ENCODE measurements at regions of chr14 and their contacts with region 1.

Region 1: GRCh38 chr14:99230208-99231151 is 41.5 kb downstream of the BCL11B start:
- DNase-seq: peak; percentile 62 to 95 (median 80)
- ATAC-seq: peak; percentile 60
- H3K4me3 ChIP-seq: peak overlapping the region; percentile 28
- H3K4me3 Mint-ChIP-seq: peak overlapping the region; percentile 90
- H3K27ac ChIP-seq: peak overlapping the region; percentile 95 to 97
- H3K27ac Mint-ChIP-seq: peak overlapping the region; percentile 95
- H3K4me1 ChIP-seq: peaks cover 100% of the 10 kb centered on the region
- H3K4me1 Mint-ChIP-seq: peaks cover 96% of the 10 kb centered on the region
- H3K27me3 ChIP-seq: no peaks in the 10 kb centered on the region
- H3K27me3 Mint-ChIP-seq: no peaks in the 10 kb centered on the region
- CTCF ChIP-seq: peak; percentile 46

Region 2: DNA sequence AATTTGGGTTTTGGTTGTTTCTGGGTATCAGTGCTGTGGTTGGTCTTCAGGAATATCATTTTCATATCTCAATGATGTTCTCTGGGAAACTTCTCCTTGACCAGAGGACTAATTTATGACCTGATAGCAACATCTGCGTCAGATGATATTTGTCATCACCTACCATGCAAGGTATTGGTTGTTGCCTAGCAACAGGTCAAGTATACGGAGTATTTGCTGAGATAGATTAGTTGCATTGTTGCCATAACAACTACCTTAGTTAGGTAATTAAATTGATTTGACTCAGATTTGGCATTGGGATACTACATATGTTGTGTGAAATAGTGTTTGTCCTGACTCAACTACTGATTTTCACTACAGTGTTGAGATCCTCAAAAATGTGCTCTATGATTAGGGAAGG is 675.6 kb before region 1 on chr14:
- CTCF ChIA-PET with region 1: no interaction called
- POLR2A ChIA-PET with region 1: no interaction called
- intact Hi-C with region 1: loop called in 1 of 2 experiments (anchors 5 kb)
- DNase-seq: no peak
- ATAC-seq: no peak
- H3K4me3 ChIP-seq: no peak overlapping the region
- H3K4me3 Mint-ChIP-seq: no peak overlapping the region
- H3K27ac ChIP-seq: no peak overlapping the region
- H3K27ac Mint-ChIP-seq: no peak overlapping the region
- H3K4me1 ChIP-seq: no peaks in the 10 kb centered on the region
- H3K4me1 Mint-ChIP-seq: no peaks in the 10 kb centered on the region
- H3K27me3 ChIP-seq: no peaks in the 10 kb centered on the region
- H3K27me3 Mint-ChIP-seq: no peaks in the 10 kb centered on the region
- CTCF ChIP-seq: no peak

Region 3: GRCh38 chr14:99215277-99215676 is 15.2 kb before region 1 on chr14:
- CTCF ChIA-PET with region 1: interaction called, 4 read pairs
- POLR2A ChIA-PET with region 1: interaction called, 4,389 read pairs
- intact Hi-C with region 1: loop called in 1 of 2 experiments (anchors 2 kb)
- DNase-seq: no peak
- ATAC-seq: no peak
- H3K4me3 ChIP-seq: peak overlapping the region; percentile 39
- H3K4me3 Mint-ChIP-seq: peak overlapping the region; percentile 84
- H3K27ac ChIP-seq: peak overlapping the region; percentile 25 to 71
- H3K27ac Mint-ChIP-seq: peak overlapping the region; percentile 95
- H3K4me1 ChIP-seq: peaks cover 99% of the 10 kb centered on the region
- H3K4me1 Mint-ChIP-seq: peaks cover 99% of the 10 kb centered on the region
- H3K27me3 ChIP-seq: no peaks in the 10 kb centered on the region
- H3K27me3 Mint-ChIP-seq: no peaks in the 10 kb centered on the region
- CTCF ChIP-seq: no peak

Region 4: GRCh38 chr14:99241325-99242010 is 11.0 kb after region 1 on chr14:
- CTCF ChIA-PET with region 1: interaction called, 8 read pairs
- POLR2A ChIA-PET with region 1: interaction called, 4,389 read pairs
- intact Hi-C with region 1: loop called in 1 of 2 experiments (anchors 1 kb)
- DNase-seq: peak in 9 of 14 experiments; percentile 49 to 82 (median 66)
- ATAC-seq: peak; percentile 38
- H3K4me3 ChIP-seq: peak overlapping the region; percentile 42
- H3K4me3 Mint-ChIP-seq: peak overlapping the region; percentile 94
- H3K27ac ChIP-seq: peak overlapping the region; percentile 95 to 97
- H3K27ac Mint-ChIP-seq: peak overlapping the region; percentile 95
- H3K4me1 ChIP-seq: peaks cover 89% of the 10 kb centered on the region
- H3K4me1 Mint-ChIP-seq: peaks cover 88% of the 10 kb centered on the region
- H3K27me3 ChIP-seq: no peaks in the 10 kb centered on the region
- H3K27me3 Mint-ChIP-seq: no peaks in the 10 kb centered on the region
- CTCF ChIP-seq: no peak

Region 5: GRCh38 chr14:99252940-99253868 is 22.7 kb after region 1 on chr14:
- CTCF ChIA-PET with region 1: interaction called, 21 read pairs
- POLR2A ChIA-PET with region 1: interaction called, 4,389 read pairs
- intact Hi-C with region 1: no loop called
- DNase-seq: peak in 11 of 14 experiments; percentile 55 to 87 (median 71)
- ATAC-seq: peak; percentile 48
- H3K4me3 ChIP-seq: peak overlapping the region; percentile 33
- H3K4me3 Mint-ChIP-seq: peak overlapping the region; percentile 83
- H3K27ac ChIP-seq: peak overlapping the region; percentile 95 to 97
- H3K27ac Mint-ChIP-seq: peak overlapping the region; percentile 99
- H3K4me1 ChIP-seq: peaks cover 100% of the 10 kb centered on the region
- H3K4me1 Mint-ChIP-seq: peaks cover 97% of the 10 kb centered on the region
- H3K27me3 ChIP-seq: no peaks in the 10 kb centered on the region
- H3K27me3 Mint-ChIP-seq: no peaks in the 10 kb centered on the region
- CTCF ChIP-seq: no peak

Region 6: GRCh38 chr14:99484106-99484505 is 253.6 kb after region 1 on chr14:
- CTCF ChIA-PET with region 1: no interaction called
- POLR2A ChIA-PET with region 1: no interaction called
- intact Hi-C with region 1: no loop called
- DNase-seq: no peak
- ATAC-seq: no peak
- H3K4me3 ChIP-seq: no peak overlapping the region
- H3K4me3 Mint-ChIP-seq: peak overlapping the region; percentile 50
- H3K27ac ChIP-seq: no peak overlapping the region
- H3K27ac Mint-ChIP-seq: no peak overlapping the region
- H3K4me1 ChIP-seq: peaks cover 22% of the 10 kb centered on the region
- H3K4me1 Mint-ChIP-seq: peaks cover 85% of the 10 kb centered on the region
- H3K27me3 ChIP-seq: no peaks in the 10 kb centered on the region
- H3K27me3 Mint-ChIP-seq: no peaks in the 10 kb centered on the region
- CTCF ChIP-seq: no peak

Region 7: GRCh38 chr14:99946652-99947489 is 716.4 kb after region 1 on chr14:
- CTCF ChIA-PET with region 1: no interaction called
- POLR2A ChIA-PET with region 1: no interaction called
- intact Hi-C with region 1: no loop called
- DNase-seq: peak; percentile 25 to 71 (median 44)
- ATAC-seq: peak; percentile 65
- H3K4me3 ChIP-seq: peak overlapping the region; percentile 37
- H3K4me3 Mint-ChIP-seq: peak overlapping the region; percentile 70
- H3K27ac ChIP-seq: no peak overlapping the region
- H3K27ac Mint-ChIP-seq: no peak overlapping the region
- H3K4me1 ChIP-seq: peaks cover 15% of the 10 kb centered on the region
- H3K4me1 Mint-ChIP-seq: peaks cover 11% of the 10 kb centered on the region
- H3K27me3 ChIP-seq: peaks cover 8 to 15% of the 10 kb centered on the region in 2 experiments
- H3K27me3 Mint-ChIP-seq: peaks cover 32% of the 10 kb centered on the region
- CTCF ChIP-seq: peak; percentile 98

Measured in CD4-positive, alpha-beta T cell (primary cell).